Activated B cell treated with CpG ODN at 0.5 μM for 24 hours (primary cell): ENCODE measurements at regions of chrX and their contacts with region 1.

Region 1: GRCh38 chrX:129823115-129823514 is 20.6 kb downstream of the ZDHHC9 start:
- DNase-seq: no peak
- ATAC-seq: peak; percentile 62
- H3K4me3 Mint-ChIP-seq: no peak overlapping the region
- H3K27ac Mint-ChIP-seq: no peak overlapping the region
- H3K4me1 Mint-ChIP-seq: peaks cover 10% of the 10 kb centered on the region
- H3K27me3 Mint-ChIP-seq: no peaks in the 10 kb centered on the region
- CTCF ChIP-seq: no peak

Region 2: GRCh38 chrX:129637217-129638109 is 185.7 kb before region 1 on chrX:
- CTCF ChIA-PET with region 1: interaction called, 22 read pairs
- POLR2A ChIA-PET with region 1: no interaction called
- intact Hi-C with region 1: loop called (anchors 1 kb)
- DNase-seq: peak; percentile 58
- ATAC-seq: peak; percentile 67
- H3K4me3 Mint-ChIP-seq: no peak overlapping the region
- H3K27ac Mint-ChIP-seq: no peak overlapping the region
- H3K4me1 Mint-ChIP-seq: no peaks in the 10 kb centered on the region
- H3K27me3 Mint-ChIP-seq: no peaks in the 10 kb centered on the region
- CTCF ChIP-seq: no peak

Region 3: DNA sequence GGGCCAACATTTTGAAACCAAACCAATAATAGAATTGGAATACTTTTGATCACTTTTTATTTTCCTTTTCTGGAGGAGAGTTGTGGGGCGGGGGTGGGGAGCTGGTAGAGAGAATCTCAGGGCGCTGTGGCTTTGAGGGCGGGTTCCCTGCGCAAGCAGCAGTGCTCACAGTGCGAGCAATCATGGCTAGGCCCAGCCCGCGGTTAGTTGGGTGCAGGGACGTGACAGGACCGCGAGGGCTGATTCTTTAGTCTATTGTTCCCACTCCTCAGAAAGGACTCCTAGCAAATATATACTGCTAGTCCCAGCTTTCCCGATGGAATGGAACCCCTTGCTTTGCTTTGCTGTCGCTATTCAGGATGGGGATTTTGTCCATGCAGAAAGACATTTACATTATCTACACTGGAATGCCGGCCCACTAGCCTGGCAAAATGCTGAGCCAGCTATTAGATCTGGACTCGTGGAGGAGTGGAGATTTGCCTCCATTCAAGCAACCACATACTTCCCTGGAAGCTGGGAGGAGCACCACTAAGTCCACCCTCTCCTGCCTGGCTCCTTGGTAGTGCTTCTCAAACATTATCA is 144.4 kb before region 1 on chrX:
- CTCF ChIA-PET with region 1: interaction called, 8 read pairs
- POLR2A ChIA-PET with region 1: interaction called, 11 read pairs
- intact Hi-C with region 1: loop called (anchors 1 kb)
- DNase-seq: no peak
- ATAC-seq: peak; percentile 28
- H3K4me3 Mint-ChIP-seq: peak overlapping the region; percentile 78
- H3K27ac Mint-ChIP-seq: peak overlapping the region; percentile 65
- H3K4me1 Mint-ChIP-seq: peaks cover 14% of the 10 kb centered on the region
- H3K27me3 Mint-ChIP-seq: no peaks in the 10 kb centered on the region
- CTCF ChIP-seq: no peak

Region 4: DNA sequence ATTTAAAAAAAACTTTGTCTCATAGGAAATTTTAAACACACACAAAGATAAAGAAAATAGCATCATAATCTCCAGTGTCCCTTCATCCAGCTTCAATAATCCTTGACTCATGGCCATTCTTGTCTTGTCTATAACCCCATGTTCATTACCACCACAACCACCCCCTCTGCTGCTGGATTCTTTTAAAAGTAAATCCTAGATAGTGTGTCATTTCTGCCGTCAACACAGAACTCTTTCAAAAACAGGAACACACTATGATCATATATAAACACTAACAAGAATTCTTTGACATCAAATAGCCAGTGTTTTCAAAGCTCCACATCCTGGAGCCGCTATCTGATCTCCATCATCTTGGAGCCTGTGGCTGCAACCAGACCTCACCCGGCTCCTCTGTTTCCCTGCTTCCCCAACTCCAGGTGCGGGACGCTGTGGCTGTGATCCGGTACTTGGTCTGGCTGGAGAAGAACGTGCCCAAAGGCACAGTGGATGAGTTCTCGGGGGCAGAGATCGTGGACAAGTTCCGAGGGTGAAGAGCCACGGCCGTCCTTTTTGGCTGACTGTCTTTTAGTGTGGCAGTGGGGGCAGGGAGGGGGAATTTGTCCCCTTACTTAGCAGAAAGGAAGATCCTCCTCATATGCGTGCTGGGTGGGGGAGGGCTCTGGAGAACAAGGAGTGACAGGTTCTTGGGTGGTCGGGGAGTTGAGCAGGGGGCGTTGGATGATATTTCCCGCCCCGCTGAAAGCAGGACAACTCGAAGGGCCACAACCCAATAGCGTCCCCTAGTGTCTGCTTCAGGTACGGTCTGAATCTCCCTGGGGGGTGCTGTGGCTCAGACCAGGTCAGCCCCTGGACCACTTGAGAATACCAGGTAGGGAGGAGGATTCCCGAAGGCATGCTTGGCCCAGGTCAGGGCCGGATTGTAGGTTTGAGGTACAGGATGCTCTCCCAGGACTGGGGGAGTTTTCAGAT is 68.8 kb before region 1 on chrX:
- CTCF ChIA-PET with region 1: interaction called, 16 read pairs
- POLR2A ChIA-PET with region 1: interaction called, 3 read pairs
- intact Hi-C with region 1: loop called (anchors 1 kb)
- DNase-seq: no peak
- ATAC-seq: no peak
- H3K4me3 Mint-ChIP-seq: peak overlapping the region; percentile 11
- H3K27ac Mint-ChIP-seq: peak overlapping the region; percentile 50
- H3K4me1 Mint-ChIP-seq: peaks cover 49% of the 10 kb centered on the region
- H3K27me3 Mint-ChIP-seq: no peaks in the 10 kb centered on the region
- CTCF ChIP-seq: no peak

Region 5: GRCh38 chrX:130060122-130061069 is 237.3 kb after region 1 on chrX:
- CTCF ChIA-PET with region 1: no interaction called
- POLR2A ChIA-PET with region 1: no interaction called
- intact Hi-C with region 1: loop called (anchors 2 kb)
- DNase-seq: peak; percentile 85
- ATAC-seq: peak; percentile 89
- H3K4me3 Mint-ChIP-seq: peak overlapping the region; percentile 85
- H3K27ac Mint-ChIP-seq: peak overlapping the region; percentile 87
- H3K4me1 Mint-ChIP-seq: peaks cover 3% of the 10 kb centered on the region
- H3K27me3 Mint-ChIP-seq: no peaks in the 10 kb centered on the region
- CTCF ChIP-seq: no peak